Breast epithelium (tissue), 4 donors: ENCODE measurements at regions of chr5 and their contacts with region 1.

Region 1: DNA sequence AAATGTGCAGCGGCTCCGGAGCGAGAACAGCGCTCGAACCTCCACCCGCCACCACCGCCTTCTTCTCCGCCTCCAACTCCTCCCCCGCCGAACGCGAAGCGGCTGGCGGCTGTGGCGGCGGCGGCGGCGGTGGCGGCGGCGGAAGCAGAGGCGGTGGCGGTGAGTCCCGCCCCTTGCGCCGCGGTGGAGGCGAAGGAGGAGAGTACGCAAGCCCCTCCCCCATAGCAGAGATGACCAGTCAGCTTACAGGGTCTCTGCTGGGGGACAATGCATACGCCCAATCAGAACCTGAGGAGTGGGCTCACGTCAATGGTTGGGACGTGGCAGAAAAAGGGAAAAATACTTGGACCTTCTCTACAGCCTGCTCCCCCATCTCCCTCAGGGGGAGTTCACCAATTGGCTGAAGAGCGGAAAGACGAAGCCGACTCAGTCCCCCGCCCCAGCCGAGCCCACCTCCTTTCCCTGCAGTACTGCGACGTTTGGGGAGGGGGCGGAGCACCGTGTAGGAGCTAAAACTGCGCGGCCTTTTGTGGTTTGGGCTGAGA is at the start of gene PJA2:
- DNase-seq: peak; percentile 98 to 99
- H3K4me3 ChIP-seq: peak within 1 kb of the TSS; percentile 72 to 89 (median 83)
- H3K27ac ChIP-seq: peak within 1 kb of the TSS; percentile 97 to 99
- H3K4me1 ChIP-seq: peaks cover 0 to 13% of the 10 kb centered on the region in 2 donors
- H3K27me3 ChIP-seq: no peaks in the 10 kb centered on the region
- CTCF ChIP-seq: peak; percentile 48 to 81 (median 66)
- POLR2A ChIP-seq: peak; percentile 90
- total RNA-seq, gene PJA2: 103 to 136 (median 117) TPM

Region 2: GRCh38 chr5:108884736-108885135 is 525.2 kb before region 1 on chr5:
- intact Hi-C with region 1: loop called (anchors 5 kb)
- DNase-seq: no peak
- H3K4me3 ChIP-seq: no peak overlapping the region
- H3K27ac ChIP-seq: no peak overlapping the region
- H3K4me1 ChIP-seq: no peaks in the 10 kb centered on the region
- H3K27me3 ChIP-seq: no peaks in the 10 kb centered on the region
- CTCF ChIP-seq: no peak
- POLR2A ChIP-seq: no peak

Region 3: GRCh38 chr5:109468737-109469420 is 59.0 kb after region 1 on chr5:
- intact Hi-C with region 1: loop called (anchors 10 kb)
- DNase-seq: peak; percentile 93 to 98
- H3K4me3 ChIP-seq: no peak overlapping the region
- H3K27ac ChIP-seq: no peak overlapping the region
- H3K4me1 ChIP-seq: peaks cover 0 to 4% of the 10 kb centered on the region in 2 donors
- H3K27me3 ChIP-seq: no peaks in the 10 kb centered on the region
- CTCF ChIP-seq: peak; percentile 58 to 72 (median 72)
- POLR2A ChIP-seq: no peak

Region 4: GRCh38 chr5:110179321-110179720 is 769.4 kb after region 1 on chr5:
- intact Hi-C with region 1: no loop called
- DNase-seq: no peak
- H3K4me3 ChIP-seq: no peak overlapping the region
- H3K27ac ChIP-seq: no peak overlapping the region
- H3K4me1 ChIP-seq: no peaks in the 10 kb centered on the region
- H3K27me3 ChIP-seq: no peaks in the 10 kb centered on the region
- CTCF ChIP-seq: no peak
- POLR2A ChIP-seq: no peak